Heart right ventricle (tissue), 16 donors: ENCODE measurements at regions of chr9 and their contacts with region 1.

Region 1: DNA sequence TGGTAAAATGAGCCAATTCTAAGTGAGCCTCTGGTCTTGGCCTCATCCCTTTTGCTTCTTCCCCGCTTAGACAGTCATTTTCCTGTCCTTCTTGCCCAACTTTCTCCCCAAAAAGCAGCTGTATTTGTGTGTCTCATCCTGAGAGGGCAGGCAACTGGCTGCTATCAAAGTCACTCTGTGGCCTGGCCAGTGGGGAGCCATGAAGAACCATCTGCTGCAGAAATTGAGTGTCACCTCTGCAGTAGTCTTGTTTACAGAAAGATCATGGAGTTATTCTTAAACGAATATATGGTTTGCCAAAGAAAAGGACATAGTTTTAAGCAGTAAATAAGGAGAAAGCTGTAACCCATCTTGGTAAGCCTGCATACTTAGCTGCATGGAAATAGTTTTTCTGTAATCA is 233.6 kb upstream of the ELAVL2 start:
- DNase-seq: no peak
- ATAC-seq: no peak
- H3K4me3 ChIP-seq: no peak overlapping the region
- H3K27ac ChIP-seq: no peak overlapping the region
- H3K4me1 ChIP-seq: no peaks in the 10 kb centered on the region
- H3K27me3 ChIP-seq: no peaks in the 10 kb centered on the region
- CTCF ChIP-seq: no peak

Region 2: GRCh38 chr9:24041160-24041690 is 18.4 kb before region 1 on chr9:
- intact Hi-C with region 1: loop called in 1 of 10 experiments (anchors 2 kb)
- DNase-seq: no peak
- ATAC-seq: no peak
- H3K4me3 ChIP-seq: no peak overlapping the region
- H3K27ac ChIP-seq: no peak overlapping the region
- H3K4me1 ChIP-seq: no peaks in the 10 kb centered on the region
- H3K27me3 ChIP-seq: no peaks in the 10 kb centered on the region
- CTCF ChIP-seq: no peak